CD8-positive, alpha-beta T cell (primary cell): ENCODE measurements at regions of chr9 and their contacts with region 1.

Region 1: DNA sequence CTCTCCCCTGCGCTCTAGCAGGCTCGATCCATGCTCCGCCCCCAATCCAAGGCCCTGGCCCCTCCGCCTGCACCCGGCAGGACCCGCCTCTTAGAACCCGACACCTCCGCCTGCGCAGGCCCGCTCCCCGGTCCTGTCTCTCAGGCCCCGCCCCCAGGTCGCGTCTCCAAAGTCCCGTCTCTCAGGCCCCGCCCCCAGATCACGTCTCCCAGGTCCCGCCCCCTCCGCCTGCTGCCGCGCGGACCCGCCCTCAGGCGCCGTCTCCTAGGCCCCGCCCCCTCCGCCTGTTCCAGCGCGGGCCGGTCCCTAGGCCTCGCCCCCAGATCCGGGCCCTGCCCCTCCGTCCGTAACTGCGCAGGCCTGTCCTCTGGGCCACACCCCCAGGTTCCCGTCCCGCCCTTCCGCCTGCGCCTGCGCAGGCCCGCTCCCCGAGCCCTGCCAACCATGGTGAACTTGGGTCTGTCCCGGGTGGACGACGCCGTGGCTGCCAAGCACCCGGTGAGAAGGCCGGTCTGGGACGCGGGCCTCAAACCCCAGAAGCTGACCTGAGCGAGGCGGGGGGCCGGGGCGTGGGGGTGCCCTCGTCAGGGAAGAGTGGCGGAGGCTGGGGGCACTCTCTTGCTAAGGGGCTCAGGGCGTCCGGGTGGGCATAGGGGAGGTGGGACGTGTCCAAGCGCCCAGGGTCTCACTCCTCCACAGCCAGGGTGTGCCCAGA is at the start of gene TMEM141:
- DNase-seq: peak; percentile 99 to 100 (median 100)
- ATAC-seq: peak; percentile 85
- H3K4me3 ChIP-seq: peak within 1 kb of the TSS; percentile 73 to 74
- H3K4me3 Mint-ChIP-seq: peak within 1 kb of the TSS; percentile 85
- H3K27ac ChIP-seq: peak within 1 kb of the TSS; percentile 88 to 94
- H3K27ac Mint-ChIP-seq: peak within 1 kb of the TSS; percentile 97
- H3K4me1 ChIP-seq: peaks cover 32% of the 10 kb centered on the region
- H3K4me1 Mint-ChIP-seq: peaks cover 29% of the 10 kb centered on the region
- H3K27me3 ChIP-seq: no peaks in the 10 kb centered on the region
- H3K27me3 Mint-ChIP-seq: no peaks in the 10 kb centered on the region
- CTCF ChIP-seq: no peak
- total RNA-seq, gene TMEM141: 14.5 to 16.6 TPM

Region 2: DNA sequence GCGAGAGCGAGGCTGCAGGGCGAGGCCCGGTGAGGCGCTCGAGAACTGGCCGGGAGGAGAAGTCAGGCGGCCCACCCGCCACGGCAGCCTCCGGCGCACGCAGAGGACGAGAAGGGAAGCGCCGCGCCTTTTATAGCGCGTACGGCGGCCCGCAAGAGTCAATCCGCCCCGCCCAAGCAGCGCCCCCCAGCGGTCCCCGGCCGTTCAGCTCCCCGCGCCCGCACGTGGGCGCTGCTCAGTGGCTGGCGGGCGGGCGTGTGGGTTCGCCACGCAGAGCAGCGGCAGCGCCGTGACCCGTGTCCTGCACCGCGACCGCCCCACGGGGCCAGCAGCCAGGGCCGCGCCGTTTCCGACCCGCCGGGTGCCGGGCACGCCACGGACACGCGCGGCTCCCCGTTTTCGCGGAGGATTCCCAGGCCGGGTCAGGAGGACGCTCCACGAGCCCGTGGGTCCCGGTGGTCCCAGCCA is 63.0 kb before region 1 on chr9:
- CTCF ChIA-PET with region 1: interaction called, 3 read pairs
- POLR2A ChIA-PET with region 1: interaction called, 5 read pairs
- intact Hi-C with region 1: loop called in 1 of 2 experiments (anchors 2 kb)
- DNase-seq: peak; percentile 86 to 97 (median 92)
- ATAC-seq: peak; percentile 80
- H3K4me3 ChIP-seq: peak overlapping the region; percentile 66 to 96
- H3K4me3 Mint-ChIP-seq: peak overlapping the region; percentile 92
- H3K27ac ChIP-seq: peak overlapping the region in 1 of 2 experiments; percentile 84
- H3K27ac Mint-ChIP-seq: peak overlapping the region; percentile 45
- H3K4me1 ChIP-seq: peaks cover 30% of the 10 kb centered on the region
- H3K4me1 Mint-ChIP-seq: peaks cover 25% of the 10 kb centered on the region
- H3K27me3 ChIP-seq: no peaks in the 10 kb centered on the region
- H3K27me3 Mint-ChIP-seq: no peaks in the 10 kb centered on the region
- CTCF ChIP-seq: peak; percentile 93

Region 3: GRCh38 chr9:136885950-136886578 is 95.0 kb after region 1 on chr9 and contains the start of gene TRAF2:
- CTCF ChIA-PET with region 1: interaction called, 3 read pairs
- POLR2A ChIA-PET with region 1: no interaction called
- intact Hi-C with region 1: loop called (anchors 1 to 2 kb)
- DNase-seq: peak; percentile 94 to 100 (median 97)
- ATAC-seq: peak; percentile 88
- H3K4me3 ChIP-seq: peak within 1 kb of the TSS; percentile 83 to 85
- H3K4me3 Mint-ChIP-seq: peak within 1 kb of the TSS; percentile 83
- H3K27ac ChIP-seq: peak within 1 kb of the TSS; percentile 53 to 92
- H3K27ac Mint-ChIP-seq: peak within 1 kb of the TSS; percentile 95
- H3K4me1 ChIP-seq: peaks cover 43% of the 10 kb centered on the region
- H3K4me1 Mint-ChIP-seq: peaks cover 36% of the 10 kb centered on the region
- H3K27me3 ChIP-seq: no peaks in the 10 kb centered on the region
- H3K27me3 Mint-ChIP-seq: no peaks in the 10 kb centered on the region
- CTCF ChIP-seq: no peak
- total RNA-seq, gene TRAF2: 7.1 to 11.8 TPM

Region 4: DNA sequence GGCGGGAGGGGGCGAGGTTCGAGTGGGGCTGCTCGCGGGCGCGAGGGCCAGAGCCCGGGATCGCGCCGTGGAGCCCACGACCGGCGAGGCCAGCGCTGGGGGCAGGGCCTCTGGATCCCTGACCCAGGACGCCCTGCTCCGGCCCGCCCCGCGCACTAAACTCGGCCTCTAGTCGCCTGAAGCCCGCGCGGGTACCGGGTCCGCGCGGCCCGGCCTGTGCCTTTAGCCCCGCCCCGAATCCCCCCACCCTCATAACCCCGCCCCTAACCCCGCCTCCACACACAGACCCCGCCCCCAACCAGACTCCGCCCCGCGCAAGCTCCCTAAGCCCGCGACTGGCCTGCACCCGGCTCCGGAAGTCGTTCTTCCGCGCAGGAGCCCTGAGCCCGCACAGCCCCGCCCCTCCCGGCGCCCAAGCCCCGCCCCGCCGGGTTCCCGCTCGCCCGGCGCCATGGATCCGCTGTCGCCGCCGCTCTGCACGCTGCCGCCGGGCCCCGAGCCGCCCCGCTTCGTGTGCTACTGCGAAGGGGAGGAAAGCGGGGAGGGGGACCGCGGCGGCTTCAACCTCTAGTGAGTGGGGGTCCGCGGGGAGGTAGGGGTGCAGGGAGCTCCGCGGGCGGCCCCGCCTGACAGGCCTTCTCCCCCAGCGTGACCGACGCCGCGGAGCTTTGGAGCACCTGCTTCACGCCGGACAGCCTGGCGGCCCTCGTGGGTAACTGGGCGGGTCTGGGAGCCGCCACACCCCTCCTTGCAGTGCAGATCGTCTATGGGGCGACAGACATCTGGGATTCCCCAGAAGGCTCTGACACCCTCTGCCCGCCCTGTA is 201.1 kb after region 1 on chr9 and contains the start of gene PAXX:
- CTCF ChIA-PET with region 1: no interaction called
- POLR2A ChIA-PET with region 1: no interaction called
- intact Hi-C with region 1: loop called (anchors 1 kb)
- DNase-seq: peak; percentile 84 to 96 (median 93)
- ATAC-seq: peak; percentile 82
- H3K4me3 ChIP-seq: peak within 1 kb of the TSS; percentile 79 to 84
- H3K4me3 Mint-ChIP-seq: peak within 1 kb of the TSS; percentile 88
- H3K27ac ChIP-seq: peak within 1 kb of the TSS; percentile 69 to 88
- H3K27ac Mint-ChIP-seq: peak within 1 kb of the TSS; percentile 95
- H3K4me1 ChIP-seq: peaks cover 35% of the 10 kb centered on the region
- H3K4me1 Mint-ChIP-seq: peaks cover 34% of the 10 kb centered on the region
- H3K27me3 ChIP-seq: no peaks in the 10 kb centered on the region
- H3K27me3 Mint-ChIP-seq: peaks cover 4% of the 10 kb centered on the region
- CTCF ChIP-seq: no peak
- total RNA-seq, gene PAXX: 101 to 111 TPM

Region 5: GRCh38 chr9:137200311-137201204 is 409.5 kb after region 1 on chr9 and contains the start of gene TPRN:
- CTCF ChIA-PET with region 1: no interaction called
- POLR2A ChIA-PET with region 1: no interaction called
- intact Hi-C with region 1: loop called in 1 of 2 experiments (anchors 1 kb)
- DNase-seq: peak; percentile 96 to 99 (median 98)
- ATAC-seq: peak; percentile 96
- H3K4me3 ChIP-seq: peak within 1 kb of the TSS; percentile 64 to 88
- H3K4me3 Mint-ChIP-seq: peak within 1 kb of the TSS; percentile 83
- H3K27ac ChIP-seq: peak within 1 kb of the TSS; percentile 65 to 82
- H3K27ac Mint-ChIP-seq: peak within 1 kb of the TSS; percentile 57
- H3K4me1 ChIP-seq: peaks cover 22% of the 10 kb centered on the region
- H3K4me1 Mint-ChIP-seq: peaks cover 27% of the 10 kb centered on the region
- H3K27me3 ChIP-seq: no peaks in the 10 kb centered on the region
- H3K27me3 Mint-ChIP-seq: no peaks in the 10 kb centered on the region
- CTCF ChIP-seq: no peak
- total RNA-seq, gene TPRN: 4.1 to 4.4 TPM

Region 6: DNA sequence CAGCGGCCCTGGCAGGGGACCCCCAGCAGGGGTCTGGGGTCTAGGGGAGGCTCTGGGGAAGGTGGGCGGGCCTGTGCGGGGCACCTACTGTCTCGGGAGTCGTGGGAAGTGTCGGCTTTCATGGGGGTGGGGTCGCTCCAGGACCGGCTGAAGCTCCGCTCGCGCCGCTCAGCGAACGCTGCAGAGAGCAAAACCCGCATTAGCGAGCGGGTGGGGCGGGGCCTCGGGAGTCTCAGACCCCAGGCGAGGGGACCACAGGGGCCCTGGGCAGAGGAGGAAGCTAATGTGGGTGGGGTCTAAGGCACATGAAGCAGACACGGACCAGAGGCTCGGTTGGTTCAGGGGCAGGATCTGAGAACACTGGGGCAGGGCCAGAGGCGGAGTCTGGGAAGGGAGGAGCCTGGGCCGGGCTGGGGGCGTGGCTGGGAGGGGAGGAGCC is 662.6 kb after region 1 on chr9:
- CTCF ChIA-PET with region 1: no interaction called
- POLR2A ChIA-PET with region 1: no interaction called
- intact Hi-C with region 1: loop called in 1 of 2 experiments (anchors 5 kb)
- DNase-seq: peak in 7 of 9 experiments; percentile 1 to 67 (median 56)
- ATAC-seq: peak; percentile 63
- H3K4me3 ChIP-seq: no peak overlapping the region
- H3K4me3 Mint-ChIP-seq: no peak overlapping the region
- H3K27ac ChIP-seq: no peak overlapping the region
- H3K27ac Mint-ChIP-seq: peak overlapping the region; percentile 18
- H3K4me1 ChIP-seq: peaks cover 57% of the 10 kb centered on the region
- H3K4me1 Mint-ChIP-seq: peaks cover 37% of the 10 kb centered on the region
- H3K27me3 ChIP-seq: no peaks in the 10 kb centered on the region
- H3K27me3 Mint-ChIP-seq: no peaks in the 10 kb centered on the region
- CTCF ChIP-seq: no peak